ENCODE measurements at regions of chr6 and their contacts with region 1.

Region 1: GRCh38 chr6:158168040-158168289 is at the start of gene SERAC1:
- DNase-seq: no peak
- H3K4me3 ChIP-seq: peak within 1 kb of the TSS; percentile 96
- H3K27ac ChIP-seq: peak within 1 kb of the TSS; percentile 94
- H3K27me3 ChIP-seq: no peaks in the 10 kb centered on the region
- CTCF ChIP-seq: no peak
- polyA plus RNA-seq, gene SERAC1: 11.2 and 14.5 TPM in 2 replicates

Region 2: GRCh38 chr6:158149641-158150040 is 18.3 kb before region 1 on chr6:
- CTCF ChIA-PET with region 1: interaction called, 4 read pairs
- POLR2A ChIA-PET with region 1: interaction called, 12 read pairs
- DNase-seq: peak; percentile 32
- H3K4me3 ChIP-seq: no peak overlapping the region
- H3K27ac ChIP-seq: no peak overlapping the region
- H3K27me3 ChIP-seq: no peaks in the 10 kb centered on the region
- CTCF ChIP-seq: no peak

Measured in AG04450 (cell line).